ENCODE measurements at regions of chr10 and their contacts with region 1.

Region 1: DNA sequence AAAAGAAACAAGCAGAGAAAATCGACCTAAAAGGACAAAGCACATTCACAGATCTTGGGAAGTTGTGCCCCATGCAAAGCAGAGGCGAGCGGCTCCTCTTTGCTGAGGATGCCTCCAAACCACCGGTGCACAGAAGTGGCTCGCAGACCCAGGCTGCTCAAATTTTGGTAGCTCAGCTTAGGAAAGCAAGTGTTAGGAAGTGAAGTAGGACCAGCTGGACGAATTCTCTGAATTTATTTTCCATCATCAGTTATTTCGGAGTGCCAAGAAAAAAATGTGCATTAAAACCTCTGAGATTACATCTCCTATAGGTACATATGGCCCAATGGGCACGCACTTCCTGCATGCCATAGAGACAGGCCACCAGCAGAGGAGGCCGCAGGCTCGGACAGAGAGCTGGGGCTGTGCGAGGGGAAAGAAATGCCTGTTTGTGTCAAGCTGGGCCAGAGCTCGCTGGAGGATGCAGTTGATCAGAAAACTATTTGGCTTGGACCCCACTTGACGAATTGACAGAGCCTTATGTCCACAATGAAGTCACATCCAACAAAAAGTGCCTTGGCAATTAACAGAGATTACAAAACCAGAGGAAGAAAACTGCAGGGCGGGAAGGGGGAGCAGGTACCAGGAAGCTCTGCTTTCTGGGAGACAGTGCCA is 122.3 kb upstream of the LYZL2 start:
- DNase-seq: peak; percentile 31 to 82
- H3K4me3 ChIP-seq: no peak overlapping the region
- H3K27ac ChIP-seq: no peak overlapping the region
- H3K4me1 ChIP-seq: no peaks in the 10 kb centered on the region
- H3K27me3 ChIP-seq: no peaks in the 10 kb centered on the region
- CTCF ChIP-seq: peak; percentile 84 to 91 (median 90)
- EP300 ChIP-seq: no peak
- POLR2A ChIP-seq: no peak
- RAD21 ChIP-seq: peak; percentile 97 to 98

Region 2: GRCh38 chr10:30722956-30723620 is 28.7 kb before region 1 on chr10:
- CTCF ChIA-PET with region 1: interaction called, 11 read pairs
- POLR2A ChIA-PET with region 1: no interaction called
- DNase-seq: no peak
- H3K4me3 ChIP-seq: no peak overlapping the region
- H3K27ac ChIP-seq: no peak overlapping the region; the same call in 1 of the 2 replicates
- H3K4me1 ChIP-seq: peaks cover 0 to 4% (median 3%) of the 10 kb centered on the region in 4 experiments; a peak in 4 of 7 replicates
- H3K27me3 ChIP-seq: no peaks in the 10 kb centered on the region
- CTCF ChIP-seq: no peak
- EP300 ChIP-seq: no peak
- POLR2A ChIP-seq: no peak
- RAD21 ChIP-seq: no peak

Region 3: GRCh38 chr10:30736685-30737232 is 15.0 kb before region 1 on chr10:
- CTCF ChIA-PET with region 1: interaction called, 10 read pairs
- POLR2A ChIA-PET with region 1: no interaction called
- DNase-seq: no peak
- H3K4me3 ChIP-seq: no peak overlapping the region
- H3K27ac ChIP-seq: no peak overlapping the region
- H3K4me1 ChIP-seq: no peaks in the 10 kb centered on the region
- H3K27me3 ChIP-seq: no peaks in the 10 kb centered on the region
- CTCF ChIP-seq: no peak
- EP300 ChIP-seq: no peak
- POLR2A ChIP-seq: no peak
- RAD21 ChIP-seq: no peak

Region 4: GRCh38 chr10:30763918-30764317 is 12.1 kb after region 1 on chr10:
- CTCF ChIA-PET with region 1: interaction called, 22 read pairs
- POLR2A ChIA-PET with region 1: no interaction called
- DNase-seq: no peak
- H3K4me3 ChIP-seq: no peak overlapping the region
- H3K27ac ChIP-seq: no peak overlapping the region
- H3K4me1 ChIP-seq: no peaks in the 10 kb centered on the region
- H3K27me3 ChIP-seq: no peaks in the 10 kb centered on the region
- CTCF ChIP-seq: no peak
- EP300 ChIP-seq: no peak
- POLR2A ChIP-seq: no peak
- RAD21 ChIP-seq: no peak

Region 5: GRCh38 chr10:30783939-30784500 is 32.2 kb after region 1 on chr10:
- CTCF ChIA-PET with region 1: interaction called, 35 read pairs
- POLR2A ChIA-PET with region 1: interaction called, 3 read pairs
- DNase-seq: peak; percentile 51 to 94
- H3K4me3 ChIP-seq: peak overlapping the region; percentile 31 to 83 (median 54); a peak in 7 of 8 replicates
- H3K27ac ChIP-seq: no peak overlapping the region
- H3K4me1 ChIP-seq: peaks cover 0 to 6% (median 2%) of the 10 kb centered on the region in 4 experiments; a peak in 2 of 7 replicates
- H3K27me3 ChIP-seq: peaks cover 0 to 12% (median 6%) of the 10 kb centered on the region in 4 experiments; a peak in 3 of 7 replicates
- CTCF ChIP-seq: peak; percentile 83 to 93 (median 92)
- EP300 ChIP-seq: no peak
- POLR2A ChIP-seq: no peak
- RAD21 ChIP-seq: peak; percentile 92 to 95

Region 6: GRCh38 chr10:30862486-30862885 is 110.7 kb after region 1 on chr10:
- CTCF ChIA-PET with region 1: no interaction called
- POLR2A ChIA-PET with region 1: no interaction called
- DNase-seq: no peak
- H3K4me3 ChIP-seq: no peak overlapping the region
- H3K27ac ChIP-seq: no peak overlapping the region
- H3K4me1 ChIP-seq: peaks cover 0 to 7% (median 3%) of the 10 kb centered on the region in 4 experiments; a peak in 3 of 7 replicates
- H3K27me3 ChIP-seq: no peaks in the 10 kb centered on the region
- CTCF ChIP-seq: no peak
- EP300 ChIP-seq: no peak
- POLR2A ChIP-seq: no peak
- RAD21 ChIP-seq: no peak

Region 7: DNA sequence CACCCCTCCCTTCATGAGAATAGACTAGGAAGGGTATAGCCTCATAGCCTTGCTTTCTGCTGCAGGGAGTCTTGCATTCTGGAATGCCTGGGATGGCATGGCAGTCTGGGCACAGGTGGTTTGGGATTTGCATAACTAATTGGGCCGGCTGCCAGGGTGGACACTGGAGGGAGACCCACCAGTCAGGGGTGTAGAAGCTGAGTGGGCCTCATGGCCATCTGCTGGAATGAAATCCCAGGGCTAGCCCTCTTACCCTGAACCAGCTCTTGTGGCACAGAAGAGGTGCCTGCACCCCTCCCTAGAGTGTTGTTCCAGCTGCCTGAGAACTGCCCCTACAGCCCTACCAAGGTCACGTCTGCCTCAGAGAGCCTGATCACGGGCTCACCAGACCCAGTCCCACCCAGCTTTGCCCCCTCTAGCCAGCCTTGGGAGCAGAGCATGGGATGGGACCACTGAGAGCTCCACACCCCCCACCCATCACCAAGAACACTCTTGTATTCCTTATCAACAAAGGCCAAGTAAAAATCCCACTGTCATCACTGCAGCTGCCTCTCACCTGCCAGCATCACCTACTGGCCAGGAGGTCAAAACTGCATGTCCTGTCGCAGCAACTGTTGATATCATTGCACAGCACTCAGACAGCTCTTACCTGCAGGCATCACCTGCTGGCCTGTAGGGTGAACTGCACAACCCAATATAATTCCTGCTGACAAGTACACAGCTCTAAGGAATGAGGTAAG is 716.2 kb after region 1 on chr10:
- CTCF ChIA-PET with region 1: interaction called, 13 read pairs
- POLR2A ChIA-PET with region 1: no interaction called
- DNase-seq: peak; percentile 54 to 69
- H3K4me3 ChIP-seq: no peak overlapping the region
- H3K27ac ChIP-seq: no peak overlapping the region
- H3K4me1 ChIP-seq: no peaks in the 10 kb centered on the region; a peak in 2 of 7 replicates
- H3K27me3 ChIP-seq: no peaks in the 10 kb centered on the region
- CTCF ChIP-seq: peak; percentile 87 to 99 (median 97)
- EP300 ChIP-seq: no peak
- POLR2A ChIP-seq: no peak
- RAD21 ChIP-seq: peak; percentile 93 to 95